ENCODE measurements at regions of chr3 and their contacts with region 1.

Region 1: GRCh38 chr3:187041362-187042307 is 97.7 kb downstream of the RPL39L start:
- DNase-seq: peak; percentile 88
- H3K4me3 Mint-ChIP-seq: peak overlapping the region; percentile 77
- H3K27ac Mint-ChIP-seq: peak overlapping the region; percentile 95
- H3K4me1 Mint-ChIP-seq: peaks cover 79% of the 10 kb centered on the region
- H3K27me3 Mint-ChIP-seq: no peaks in the 10 kb centered on the region

Region 2: GRCh38 chr3:186540221-186540834 is 501.3 kb before region 1 on chr3:
- intact Hi-C with region 1: no loop called
- DNase-seq: peak; percentile 95
- H3K4me3 Mint-ChIP-seq: peak overlapping the region; percentile 28
- H3K27ac Mint-ChIP-seq: peak overlapping the region; percentile 21
- H3K4me1 Mint-ChIP-seq: peaks cover 31% of the 10 kb centered on the region
- H3K27me3 Mint-ChIP-seq: no peaks in the 10 kb centered on the region

Region 3: DNA sequence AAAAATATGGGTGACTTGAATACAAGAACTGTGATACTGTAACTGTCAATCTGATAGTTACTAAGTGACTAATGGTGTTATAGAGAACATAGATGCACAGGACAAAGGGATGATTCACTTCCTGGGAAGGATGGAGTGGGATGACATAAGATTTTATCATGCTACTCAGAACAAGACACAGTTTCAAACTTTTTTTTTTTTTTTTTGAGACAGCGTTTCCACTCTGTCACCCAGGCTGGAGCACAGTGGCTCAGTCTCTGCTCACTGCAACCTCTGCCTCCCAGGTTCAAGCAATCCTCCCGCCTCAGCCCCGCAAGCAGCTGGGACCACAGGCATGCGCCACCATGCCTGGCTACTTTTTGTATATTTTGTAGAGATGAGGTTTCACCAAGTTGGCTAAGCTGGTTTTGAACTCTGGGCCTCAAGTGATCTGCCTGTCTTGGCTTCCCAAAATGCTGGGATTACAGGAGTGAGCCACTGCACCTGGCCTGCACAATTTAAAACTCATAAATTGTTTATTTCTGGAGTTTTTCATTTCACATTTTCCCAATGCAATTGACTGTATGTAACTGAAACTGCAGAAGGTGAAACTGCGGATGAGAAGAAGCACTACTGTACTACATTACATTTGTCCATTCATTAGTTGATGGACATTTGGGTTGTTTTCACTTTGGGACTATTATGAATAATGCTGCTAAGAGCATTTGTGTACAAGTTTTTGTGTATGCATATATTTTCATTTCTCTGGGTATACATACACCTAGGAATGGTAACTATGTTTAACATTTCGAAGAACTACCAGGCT is 158.6 kb before region 1 on chr3:
- intact Hi-C with region 1: loop called (anchors 1 kb)
- DNase-seq: peak; percentile 80
- H3K4me3 Mint-ChIP-seq: peak overlapping the region; percentile 52
- H3K27ac Mint-ChIP-seq: peak overlapping the region; percentile 89
- H3K4me1 Mint-ChIP-seq: peaks cover 53% of the 10 kb centered on the region
- H3K27me3 Mint-ChIP-seq: no peaks in the 10 kb centered on the region

Region 4: DNA sequence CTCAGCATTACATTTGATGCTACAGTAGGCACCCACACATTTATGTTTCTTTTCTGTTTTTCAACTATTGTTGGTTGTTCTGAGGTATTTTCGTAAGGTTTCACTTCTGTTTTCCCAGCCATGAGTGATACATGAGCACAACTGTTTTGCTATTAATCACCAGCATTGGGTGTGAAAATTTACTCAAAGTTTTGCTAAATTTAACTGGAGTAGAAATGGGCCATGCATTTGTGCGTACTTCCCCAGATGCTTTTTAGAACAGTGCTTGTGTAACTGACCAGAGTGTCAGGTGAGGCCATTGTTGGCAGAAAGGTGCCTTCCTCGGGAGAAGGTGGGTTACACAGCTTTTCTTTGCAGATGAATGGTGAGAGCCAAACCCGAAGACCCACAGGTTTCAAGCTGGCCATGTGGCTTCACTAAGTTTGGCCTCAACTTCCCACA is 40.9 kb before region 1 on chr3:
- intact Hi-C with region 1: loop called (anchors 2 kb)
- DNase-seq: peak; percentile 78
- H3K4me3 Mint-ChIP-seq: peak overlapping the region; percentile 63
- H3K27ac Mint-ChIP-seq: peak overlapping the region; percentile 87
- H3K4me1 Mint-ChIP-seq: peaks cover 56% of the 10 kb centered on the region
- H3K27me3 Mint-ChIP-seq: no peaks in the 10 kb centered on the region

Region 5: GRCh38 chr3:187066228-187066995 is 24.8 kb after region 1 on chr3:
- intact Hi-C with region 1: loop called (anchors 2 kb)
- DNase-seq: peak; percentile 83
- H3K4me3 Mint-ChIP-seq: no peak overlapping the region
- H3K27ac Mint-ChIP-seq: peak overlapping the region; percentile 79
- H3K4me1 Mint-ChIP-seq: peaks cover 52% of the 10 kb centered on the region
- H3K27me3 Mint-ChIP-seq: no peaks in the 10 kb centered on the region

Region 6: DNA sequence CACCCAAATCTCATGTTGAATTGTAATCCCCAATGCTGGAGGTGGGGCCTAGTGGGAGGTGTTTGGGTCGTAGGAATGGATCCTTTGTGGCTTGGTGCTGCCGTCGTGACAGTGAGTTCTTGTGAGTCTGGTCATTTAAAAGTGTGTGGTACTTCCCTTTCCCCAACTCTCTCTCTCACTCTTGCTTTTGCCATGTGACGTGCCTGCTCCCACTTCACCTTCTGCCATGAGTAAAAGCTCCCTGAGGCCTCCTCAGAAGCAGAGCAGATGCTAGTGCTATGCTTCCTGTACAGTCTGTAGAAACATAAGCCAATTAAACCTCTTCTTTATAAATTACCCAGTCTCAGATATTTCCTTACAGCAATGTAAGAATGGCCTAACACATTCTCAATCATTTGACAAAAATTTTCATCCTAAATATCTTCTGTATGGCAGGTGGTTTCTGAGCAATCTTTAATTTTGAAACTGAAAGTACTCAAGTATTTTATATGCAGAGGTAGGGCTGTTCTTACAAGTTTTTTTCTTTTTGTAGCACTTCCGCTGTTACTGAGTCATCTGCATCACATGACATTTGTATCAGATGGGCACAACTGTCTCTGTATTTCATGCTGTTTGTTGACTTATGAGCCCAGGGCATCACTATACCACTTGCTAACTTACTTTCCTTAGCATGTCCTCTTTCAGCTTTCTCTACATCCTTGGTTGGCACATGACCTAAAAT is 88.9 kb after region 1 on chr3:
- intact Hi-C with region 1: loop called (anchors 2 kb)
- DNase-seq: peak; percentile 86
- H3K4me3 Mint-ChIP-seq: peak overlapping the region; percentile 72
- H3K27ac Mint-ChIP-seq: peak overlapping the region; percentile 96
- H3K4me1 Mint-ChIP-seq: peaks cover 38% of the 10 kb centered on the region
- H3K27me3 Mint-ChIP-seq: no peaks in the 10 kb centered on the region

Region 7: DNA sequence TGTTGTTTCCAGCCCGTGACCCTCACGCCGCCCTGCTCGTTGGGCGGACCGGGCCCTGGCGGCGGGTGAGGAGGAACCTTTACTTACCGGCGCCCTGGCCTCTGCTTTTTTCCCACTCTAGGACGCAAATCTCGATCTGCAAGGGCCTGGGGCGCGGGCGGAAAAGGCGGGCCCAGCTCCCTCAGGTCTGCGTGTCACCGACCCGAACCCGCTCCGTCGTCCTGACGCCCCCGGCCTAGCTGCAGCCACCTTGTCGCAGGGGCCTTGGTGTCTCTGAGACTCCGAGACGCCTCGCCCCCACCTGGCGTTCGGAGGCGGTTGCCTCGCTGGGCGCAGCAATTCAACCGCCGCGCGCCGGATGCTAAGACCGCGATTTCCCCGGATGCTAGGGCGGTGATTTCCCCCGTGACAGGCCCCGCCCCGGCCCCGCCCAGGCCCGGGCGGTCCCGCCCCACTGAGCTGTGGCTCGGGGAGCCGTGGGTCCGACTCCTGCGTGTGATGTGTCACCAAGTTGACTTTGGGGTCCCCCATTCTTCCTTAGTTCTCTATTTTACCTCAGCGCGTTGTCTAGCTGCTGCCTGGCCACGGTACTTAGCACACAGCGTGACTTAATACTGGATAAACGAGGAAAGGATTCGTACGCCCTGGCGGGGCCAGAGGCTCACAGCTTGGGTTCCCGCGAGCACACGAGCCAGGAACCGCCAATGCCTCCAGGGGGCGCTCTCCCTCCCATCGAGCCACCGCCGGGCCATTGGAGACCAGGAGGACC is 97.7 kb after region 1 on chr3 and contains the start of gene RPL39L:
- intact Hi-C with region 1: loop called (anchors 1 kb)
- DNase-seq: peak; percentile 98
- H3K4me3 Mint-ChIP-seq: peak within 1 kb of the TSS; percentile 93
- H3K27ac Mint-ChIP-seq: peak within 1 kb of the TSS; percentile 98
- H3K4me1 Mint-ChIP-seq: peaks cover 27% of the 10 kb centered on the region
- H3K27me3 Mint-ChIP-seq: no peaks in the 10 kb centered on the region
- total RNA-seq, gene RPL39L: 10.4 and 11.7 TPM in 2 replicates